Natural killer cell (primary cell): ENCODE measurements at regions of chr19 and their contacts with region 1.

Region 1: DNA sequence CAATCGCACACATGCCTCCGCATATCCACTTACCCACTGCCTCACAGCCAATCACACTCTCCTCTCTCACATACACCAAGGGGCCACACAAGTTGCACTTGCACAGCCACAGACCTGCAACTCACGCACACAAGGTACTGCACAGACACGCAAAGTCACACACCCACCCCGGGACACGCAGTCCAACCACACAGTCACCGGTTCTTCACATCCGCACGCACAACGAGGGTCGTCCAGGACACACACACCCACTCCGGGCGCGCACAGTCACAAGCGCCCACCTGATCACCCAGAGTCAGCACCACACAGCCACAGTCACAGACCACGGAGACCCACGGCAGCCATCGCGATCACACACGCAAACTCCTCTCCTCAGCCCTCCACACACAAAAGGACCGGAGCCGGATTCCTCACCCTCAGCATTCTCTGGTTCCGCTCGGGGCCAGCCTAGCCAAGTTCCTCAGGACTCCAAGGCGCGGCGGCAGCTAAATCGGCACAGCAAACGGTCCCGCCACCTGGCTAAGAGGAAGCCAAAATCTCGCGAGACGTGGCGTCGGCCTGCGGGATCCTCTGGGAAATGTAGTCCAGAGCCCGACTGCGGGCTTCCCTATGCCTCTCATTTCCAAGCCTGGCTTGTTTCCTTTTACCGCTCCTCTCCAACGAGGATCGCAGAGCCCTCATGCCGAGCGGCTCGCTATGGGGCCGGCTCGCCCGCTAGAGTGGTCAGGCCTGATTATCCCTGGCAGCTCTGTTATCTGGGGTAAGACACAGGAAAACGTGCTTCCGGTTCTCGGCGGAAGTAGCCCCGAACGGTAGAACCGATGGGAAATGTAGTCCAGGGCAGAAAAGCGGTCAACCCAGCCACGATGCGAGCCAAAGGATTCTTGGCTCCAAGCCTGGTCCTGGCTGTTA is at the start of gene ZNF850:
- DNase-seq: peak; percentile 91 to 97
- ATAC-seq: peak; percentile 90 to 93 (median 91)
- H3K4me3 ChIP-seq: peak within 1 kb of the TSS; percentile 67
- H3K4me3 Mint-ChIP-seq: peak within 1 kb of the TSS; percentile 100
- H3K27ac ChIP-seq: peak within 1 kb of the TSS; percentile 56
- H3K27ac Mint-ChIP-seq: peak within 1 kb of the TSS; percentile 95 to 97
- H3K4me1 ChIP-seq: peaks cover 19% of the 10 kb centered on the region
- H3K4me1 Mint-ChIP-seq: peaks cover 26 to 27% of the 10 kb centered on the region in 2 donors
- H3K27me3 ChIP-seq: no peaks in the 10 kb centered on the region
- H3K27me3 Mint-ChIP-seq: no peaks in the 10 kb centered on the region
- CTCF ChIP-seq: no peak
- total RNA-seq, gene ZNF850: 1.7 to 4.3 (median 4.2) TPM

Region 2: GRCh38 chr19:36214386-36215275 is 557.9 kb before region 1 on chr19 and contains the starts of genes ZNF146 and ZNF565:
- intact Hi-C with region 1: loop called (anchors 10 kb)
- DNase-seq: peak; percentile 90 to 97
- ATAC-seq: peak; percentile 81 to 95 (median 86)
- H3K4me3 ChIP-seq: peak within 1 kb of the TSS; percentile 92
- H3K4me3 Mint-ChIP-seq: no peak within 1 kb of the TSS
- H3K27ac ChIP-seq: peak within 1 kb of the TSS; percentile 91
- H3K27ac Mint-ChIP-seq: no peak within 1 kb of the TSS
- H3K4me1 ChIP-seq: peaks cover 18% of the 10 kb centered on the region
- H3K4me1 Mint-ChIP-seq: peaks cover 12 to 14% of the 10 kb centered on the region in 2 donors
- H3K27me3 ChIP-seq: no peaks in the 10 kb centered on the region
- H3K27me3 Mint-ChIP-seq: no peaks in the 10 kb centered on the region
- CTCF ChIP-seq: no peak
- total RNA-seq, gene ZNF146: 20.3 to 37.3 (median 21.5) TPM
- total RNA-seq, gene ZNF565: 7.7 to 19.1 (median 10.5) TPM

Region 3: DNA sequence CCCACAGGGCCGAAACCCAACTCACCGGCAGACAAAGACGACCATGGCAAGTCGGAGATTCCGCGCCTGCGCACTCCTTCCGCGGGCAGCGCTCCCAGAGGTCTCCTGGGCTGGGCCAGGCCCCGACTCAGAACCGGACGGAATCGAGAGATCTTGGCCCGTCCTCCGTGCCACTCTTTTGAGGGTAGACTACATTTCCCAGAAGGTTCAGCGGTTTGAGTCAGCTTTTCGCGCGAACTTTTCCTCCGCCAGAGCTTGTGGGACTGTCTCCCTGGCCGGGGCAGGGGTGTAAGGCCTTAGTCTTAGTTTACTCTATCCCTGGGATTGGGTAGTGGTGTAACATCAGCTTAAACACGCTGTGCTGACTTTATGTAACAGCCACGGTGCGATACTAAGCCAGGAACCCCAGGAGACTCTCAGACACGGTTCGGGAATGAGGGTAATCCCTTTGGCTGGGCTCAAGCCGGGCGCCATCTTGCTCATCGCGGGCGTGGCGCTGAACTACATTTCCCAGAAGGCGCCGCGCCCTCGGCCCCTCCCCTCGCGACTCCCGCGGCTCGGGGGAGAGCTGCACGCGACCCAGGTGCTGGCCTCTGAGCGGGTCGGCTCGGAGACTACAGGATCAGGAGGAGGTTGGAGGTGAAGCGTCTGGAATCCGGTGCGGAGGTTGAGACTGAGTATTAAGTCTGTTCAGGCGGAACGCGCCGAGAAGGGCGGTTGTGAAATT is 244.2 kb before region 1 on chr19 and contains the start of gene ZNF260:
- intact Hi-C with region 1: loop called (anchors 1 kb)
- DNase-seq: peak; percentile 90 to 94
- ATAC-seq: peak; percentile 77 to 92 (median 84)
- H3K4me3 ChIP-seq: peak within 1 kb of the TSS; percentile 76
- H3K4me3 Mint-ChIP-seq: peak within 1 kb of the TSS; percentile 97
- H3K27ac ChIP-seq: peak within 1 kb of the TSS; percentile 93
- H3K27ac Mint-ChIP-seq: peak within 1 kb of the TSS; percentile 94 to 99
- H3K4me1 ChIP-seq: peaks cover 17% of the 10 kb centered on the region
- H3K4me1 Mint-ChIP-seq: peaks cover 27 to 30% of the 10 kb centered on the region in 2 donors
- H3K27me3 ChIP-seq: no peaks in the 10 kb centered on the region
- H3K27me3 Mint-ChIP-seq: no peaks in the 10 kb centered on the region
- CTCF ChIP-seq: no peak
- total RNA-seq, gene ZNF260: 8.0 to 9.4 (median 8.4) TPM

Region 4: DNA sequence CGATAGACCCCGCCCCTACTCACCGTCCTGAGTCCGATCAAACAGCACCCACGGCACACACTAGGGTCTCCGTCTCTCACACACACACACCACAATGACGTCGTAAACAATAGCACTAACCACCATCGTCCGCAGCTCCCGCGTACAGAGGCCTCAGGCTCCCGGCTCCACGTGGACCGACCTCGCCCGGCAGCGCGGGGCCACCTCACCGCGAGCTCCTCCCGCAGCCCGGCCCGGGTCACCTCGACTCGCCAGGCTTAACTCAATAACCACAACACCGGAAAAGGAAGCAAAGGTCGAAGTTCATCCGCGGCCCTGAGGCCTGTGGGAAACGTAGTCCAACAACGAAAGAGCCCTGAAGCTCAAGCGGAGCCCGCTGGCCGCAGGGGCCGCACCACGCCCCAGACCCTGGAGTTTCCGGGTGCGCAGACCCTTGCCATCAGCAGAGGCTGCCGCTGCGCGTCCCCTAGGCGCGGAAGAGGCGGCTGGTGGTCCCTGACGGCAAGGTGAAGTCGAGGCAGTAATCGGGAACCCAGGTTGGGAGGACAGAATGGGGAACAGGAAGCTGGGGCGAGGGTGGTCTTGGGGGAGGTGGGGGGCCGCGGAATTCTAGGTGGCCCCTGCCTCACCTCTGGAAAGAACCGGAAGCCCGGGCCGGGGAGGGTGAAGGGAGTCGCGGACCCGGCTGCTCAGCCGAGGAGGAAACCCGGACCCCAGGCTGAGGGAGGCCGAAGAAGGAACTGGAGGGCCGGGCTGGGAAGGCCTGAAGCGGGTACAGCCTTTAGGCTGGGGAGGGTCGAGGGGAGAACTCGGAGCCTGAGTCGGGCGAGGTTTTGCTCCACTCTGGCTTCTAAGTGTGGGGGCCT is 199.3 kb before region 1 on chr19 and contains the start of gene ZNF529:
- intact Hi-C with region 1: no loop called
- DNase-seq: peak; percentile 88 to 95
- ATAC-seq: peak; percentile 90 to 97 (median 90)
- H3K4me3 ChIP-seq: peak within 1 kb of the TSS; percentile 83
- H3K4me3 Mint-ChIP-seq: peak within 1 kb of the TSS; percentile 89
- H3K27ac ChIP-seq: peak within 1 kb of the TSS; percentile 86
- H3K27ac Mint-ChIP-seq: peak within 1 kb of the TSS; percentile 91 to 100
- H3K4me1 ChIP-seq: peaks cover 17% of the 10 kb centered on the region
- H3K4me1 Mint-ChIP-seq: peaks cover 36% of the 10 kb centered on the region in 2 donors
- H3K27me3 ChIP-seq: no peaks in the 10 kb centered on the region
- H3K27me3 Mint-ChIP-seq: no peaks in the 10 kb centered on the region
- CTCF ChIP-seq: no peak
- total RNA-seq, gene ZNF529: 23.5 to 36.4 (median 29.2) TPM

Region 5: DNA sequence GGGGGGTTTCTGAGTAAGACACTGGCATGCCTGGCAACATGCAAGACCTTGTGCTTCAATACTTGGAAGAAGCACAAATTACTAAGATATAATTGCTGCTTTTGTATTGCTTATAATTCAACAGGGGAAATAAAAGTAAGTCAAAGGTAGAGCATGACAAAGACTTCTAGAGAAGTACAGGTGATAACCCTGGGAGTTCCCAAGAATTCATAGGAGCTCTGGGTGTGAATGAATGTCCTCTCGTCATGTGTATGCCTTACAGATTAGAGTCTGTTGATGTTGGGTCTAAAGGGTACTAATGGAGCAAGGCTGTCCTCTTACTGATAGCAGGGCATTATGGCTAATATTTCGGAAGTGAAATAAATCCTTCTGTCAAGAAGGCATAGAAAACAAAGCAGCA is 98.4 kb before region 1 on chr19:
- intact Hi-C with region 1: no loop called
- DNase-seq: no peak
- ATAC-seq: no peak
- H3K4me3 ChIP-seq: no peak overlapping the region
- H3K4me3 Mint-ChIP-seq: no peak overlapping the region
- H3K27ac ChIP-seq: no peak overlapping the region
- H3K27ac Mint-ChIP-seq: no peak overlapping the region
- H3K4me1 ChIP-seq: no peaks in the 10 kb centered on the region
- H3K4me1 Mint-ChIP-seq: peaks cover 0 to 5% of the 10 kb centered on the region in 2 donors
- H3K27me3 ChIP-seq: no peaks in the 10 kb centered on the region
- H3K27me3 Mint-ChIP-seq: no peaks in the 10 kb centered on the region
- CTCF ChIP-seq: no peak

Region 6: DNA sequence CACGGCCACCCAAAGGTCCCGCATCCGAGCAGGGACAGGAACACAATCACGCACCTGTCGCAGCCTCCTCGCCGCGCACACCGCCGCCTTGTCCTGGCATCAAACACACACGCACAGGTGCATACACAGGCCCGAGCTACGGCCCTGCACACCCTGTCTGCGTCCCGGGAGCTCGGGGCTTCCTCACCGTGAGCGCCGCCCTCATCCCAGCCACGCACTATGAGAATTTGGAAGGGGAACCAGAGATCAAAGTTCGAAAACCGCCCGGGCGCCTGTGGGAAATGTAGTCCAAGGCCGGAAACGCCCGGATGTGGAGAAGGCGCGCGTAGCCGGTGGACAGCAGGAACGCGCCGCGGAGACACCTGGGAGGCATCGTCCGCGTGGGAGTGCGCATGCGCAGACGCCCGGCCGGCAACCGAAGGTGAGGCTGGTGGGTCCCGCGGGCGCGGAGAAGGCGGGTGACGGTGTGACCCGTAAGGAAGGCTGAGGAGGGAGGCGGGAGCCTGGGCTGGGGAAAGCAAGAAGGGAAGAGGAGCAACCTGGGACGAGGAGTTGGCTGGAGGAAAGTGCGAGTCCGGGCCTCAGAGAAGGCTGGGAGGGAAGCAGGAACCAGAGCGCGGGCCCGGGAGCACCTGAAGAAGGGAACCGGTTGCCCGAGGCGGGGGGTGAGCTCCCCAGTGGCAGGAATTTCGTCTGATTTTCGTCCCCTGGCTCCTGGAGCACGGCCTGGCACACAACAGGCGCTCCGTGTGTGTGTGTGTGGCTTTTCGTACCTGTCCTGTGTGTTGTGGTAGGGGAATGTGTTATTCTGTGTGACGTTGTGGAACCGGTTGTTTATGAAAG is 85.1 kb before region 1 on chr19 and contains the start of gene ZNF567:
- intact Hi-C with region 1: loop called (anchors 5 kb)
- DNase-seq: peak; percentile 92 to 98
- ATAC-seq: peak; percentile 91 to 96 (median 95)
- H3K4me3 ChIP-seq: peak within 1 kb of the TSS; percentile 90
- H3K4me3 Mint-ChIP-seq: peak within 1 kb of the TSS; percentile 98
- H3K27ac ChIP-seq: peak within 1 kb of the TSS; percentile 80
- H3K27ac Mint-ChIP-seq: peak within 1 kb of the TSS; percentile 93 to 99
- H3K4me1 ChIP-seq: peaks cover 18% of the 10 kb centered on the region
- H3K4me1 Mint-ChIP-seq: peaks cover 28 to 39% of the 10 kb centered on the region in 2 donors
- H3K27me3 ChIP-seq: no peaks in the 10 kb centered on the region
- H3K27me3 Mint-ChIP-seq: no peaks in the 10 kb centered on the region
- CTCF ChIP-seq: no peak
- total RNA-seq, gene ZNF567: 5.6 to 11.8 (median 10.5) TPM

Region 7: GRCh38 chr19:36837906-36838783 is 65.6 kb after region 1 on chr19 and contains the start of gene ZNF790:
- intact Hi-C with region 1: loop called (anchors 1 kb)
- DNase-seq: peak; percentile 83 to 91
- ATAC-seq: peak; percentile 91 to 97 (median 94)
- H3K4me3 ChIP-seq: peak within 1 kb of the TSS; percentile 80
- H3K4me3 Mint-ChIP-seq: no peak within 1 kb of the TSS
- H3K27ac ChIP-seq: peak within 1 kb of the TSS; percentile 94
- H3K27ac Mint-ChIP-seq: no peak within 1 kb of the TSS
- H3K4me1 ChIP-seq: peaks cover 14% of the 10 kb centered on the region
- H3K4me1 Mint-ChIP-seq: peaks cover 0 to 6% of the 10 kb centered on the region in 2 donors
- H3K27me3 ChIP-seq: no peaks in the 10 kb centered on the region
- H3K27me3 Mint-ChIP-seq: no peaks in the 10 kb centered on the region
- CTCF ChIP-seq: no peak
- total RNA-seq, gene ZNF790: 2.6 to 6.8 (median 5.0) TPM

Region 8: GRCh38 chr19:36915992-36916830 is 143.6 kb after region 1 on chr19 and contains the starts of genes ZNF568 and ZNF829:
- intact Hi-C with region 1: loop called (anchors 1 kb)
- DNase-seq: peak; percentile 90 to 96
- ATAC-seq: peak; percentile 92 to 98 (median 94)
- H3K4me3 ChIP-seq: peak within 1 kb of the TSS; percentile 66
- H3K4me3 Mint-ChIP-seq: peak within 1 kb of the TSS; percentile 87
- H3K27ac ChIP-seq: peak within 1 kb of the TSS; percentile 95
- H3K27ac Mint-ChIP-seq: peak within 1 kb of the TSS; percentile 89 to 93
- H3K4me1 ChIP-seq: peaks cover 13% of the 10 kb centered on the region
- H3K4me1 Mint-ChIP-seq: peaks cover 35% of the 10 kb centered on the region in 2 donors
- H3K27me3 ChIP-seq: no peaks in the 10 kb centered on the region
- H3K27me3 Mint-ChIP-seq: no peaks in the 10 kb centered on the region
- CTCF ChIP-seq: peak; percentile 75
- total RNA-seq, gene ZNF568: 9.4 to 15.5 (median 15.3) TPM
- total RNA-seq, gene ZNF829: 5.5 to 7.6 (median 5.5) TPM

Region 9: DNA sequence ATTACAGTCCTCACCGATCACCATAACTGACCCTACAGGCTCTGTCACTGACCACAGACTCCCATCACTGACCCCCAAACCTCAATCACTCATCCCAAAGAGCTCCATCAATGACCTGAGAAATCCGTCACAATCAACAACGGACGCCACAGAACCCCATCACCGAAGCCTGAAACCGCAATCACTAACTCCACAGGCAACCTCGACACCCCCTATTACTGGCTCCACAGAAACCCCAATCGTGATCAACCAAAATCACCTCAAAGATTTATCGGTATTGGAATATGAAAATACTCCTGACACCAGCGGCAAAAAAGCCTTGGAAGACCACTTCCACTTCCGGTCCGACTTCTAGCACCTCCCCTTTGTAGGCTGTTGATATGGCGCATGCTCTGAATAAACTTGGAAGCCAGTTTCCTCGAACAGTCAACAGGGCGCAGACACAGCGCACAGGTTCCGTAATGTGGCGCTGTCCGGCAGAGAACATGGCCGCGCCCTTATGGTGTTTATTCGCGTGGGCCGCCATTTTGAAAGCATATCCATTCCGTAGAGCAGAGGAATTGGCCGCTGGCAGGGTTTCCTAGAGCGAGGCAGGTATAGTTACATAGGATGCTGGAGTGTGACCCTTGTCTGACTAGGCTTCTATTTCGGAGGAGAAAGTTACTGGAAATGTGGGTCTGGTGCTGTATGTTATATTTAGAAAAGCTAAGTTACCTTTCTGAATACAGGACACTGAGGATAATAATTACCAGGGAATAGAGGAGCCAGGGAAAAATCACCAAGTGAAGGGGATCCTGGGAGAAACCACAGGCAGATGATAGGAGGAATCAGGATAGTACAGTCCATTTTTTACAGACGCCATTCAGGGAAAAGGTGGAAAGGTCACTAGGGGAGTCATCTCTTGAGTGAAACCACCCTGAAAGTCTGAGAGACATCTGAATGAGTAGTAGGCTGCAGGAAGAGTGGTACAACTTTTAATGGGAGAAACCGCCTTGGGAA is 400.1 kb after region 1 on chr19 and contains the start of gene ZNF585A:
- intact Hi-C with region 1: loop called (anchors 5 kb)
- DNase-seq: peak; percentile 86 to 97
- ATAC-seq: peak; percentile 98 to 99 (median 99)
- H3K4me3 ChIP-seq: peak within 1 kb of the TSS; percentile 71
- H3K4me3 Mint-ChIP-seq: no peak within 1 kb of the TSS
- H3K27ac ChIP-seq: peak within 1 kb of the TSS; percentile 79
- H3K27ac Mint-ChIP-seq: no peak within 1 kb of the TSS
- H3K4me1 ChIP-seq: peaks cover 2% of the 10 kb centered on the region
- H3K4me1 Mint-ChIP-seq: peaks cover 0 to 4% of the 10 kb centered on the region in 2 donors
- H3K27me3 ChIP-seq: no peaks in the 10 kb centered on the region
- H3K27me3 Mint-ChIP-seq: no peaks in the 10 kb centered on the region
- CTCF ChIP-seq: no peak
- total RNA-seq, gene ZNF585A: 8.9 to 12.6 (median 9.9) TPM